HepG2 (cell line): ENCODE measurements at regions of chr1 and their contacts with region 1.

Region 1: GRCh38 chr1:161165742-161166668 is at the start of gene PPOX:
- DNase-seq: peak; percentile 97
- ATAC-seq: peak; percentile 96
- H3K4me3 ChIP-seq: peak within 1 kb of the TSS; percentile 71 to 88 (median 74)
- H3K27ac ChIP-seq: peak within 1 kb of the TSS; percentile 62
- H3K4me1 ChIP-seq: peaks cover 25% of the 10 kb centered on the region
- H3K27me3 ChIP-seq: no peaks in the 10 kb centered on the region
- CTCF ChIP-seq: peak; percentile 61
- EP300 ChIP-seq: 0 out of 4 replicates have a peak, but pooled peaks of 1 of the 2 experiments have one; percentile 10
- POLR2A ChIP-seq: peak; percentile 69 to 79
- RAD21 ChIP-seq: no peak
- total RNA-seq, gene PPOX: 13.0 and 15.5 TPM in 2 replicates

Region 2: DNA sequence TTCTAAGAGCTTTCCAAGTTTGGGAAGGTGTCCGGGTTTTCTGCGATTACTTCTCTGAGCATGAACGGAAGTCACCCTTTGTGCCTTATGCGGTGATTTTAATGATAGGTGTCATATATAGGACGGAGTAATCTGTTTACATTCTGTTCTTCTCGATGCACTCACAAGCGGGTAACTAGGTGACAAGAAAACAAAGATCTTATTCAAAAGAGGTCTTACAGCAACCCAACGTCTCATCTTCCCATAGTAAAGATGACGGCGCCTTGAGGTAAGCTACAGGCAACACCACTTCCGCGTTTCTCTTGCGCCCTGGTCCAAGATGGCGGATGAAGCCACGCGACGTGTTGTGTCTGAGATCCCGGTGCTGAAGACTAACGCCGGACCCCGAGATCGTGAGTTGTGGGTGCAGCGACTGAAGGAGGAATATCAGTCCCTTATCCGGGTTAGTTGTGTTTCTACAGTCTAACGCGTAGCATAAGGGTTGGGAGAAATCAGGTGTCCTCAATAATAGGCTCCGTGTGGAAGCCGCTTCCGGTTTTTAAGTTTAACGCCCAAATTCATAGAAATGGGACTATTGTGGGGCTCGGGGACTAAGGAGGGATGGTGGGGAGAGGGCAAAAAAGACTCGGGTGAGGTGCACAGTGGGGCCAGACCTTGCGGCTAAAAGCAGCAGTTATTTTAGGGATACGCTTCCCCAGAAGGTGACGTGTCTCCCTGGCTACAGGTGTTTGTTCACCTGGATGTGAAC is 12.2 kb before region 1 on chr1 and contains the start of gene UFC1:
- CTCF ChIA-PET with region 1: no interaction called
- POLR2A ChIA-PET with region 1: interaction called, 30 read pairs
- in situ Hi-C with region 1: no loop called
- intact Hi-C with region 1: no loop called
- DNase-seq: peak; percentile 86
- ATAC-seq: peak; percentile 95
- H3K4me3 ChIP-seq: peak within 1 kb of the TSS; percentile 78 to 85 (median 78)
- H3K27ac ChIP-seq: peak within 1 kb of the TSS; percentile 99
- H3K4me1 ChIP-seq: peaks cover 24% of the 10 kb centered on the region
- H3K27me3 ChIP-seq: no peaks in the 10 kb centered on the region; a peak in 1 of 5 replicates
- CTCF ChIP-seq: no peak
- EP300 ChIP-seq: no peak
- POLR2A ChIP-seq: peak; percentile 77 to 93
- RAD21 ChIP-seq: no peak
- total RNA-seq, gene UFC1: 72.8 and 96.5 TPM in 2 replicates

Region 3: GRCh38 chr1:161177112-161177935 is 11.3 kb after region 1 on chr1 and contains the start of gene B4GALT3:
- CTCF ChIA-PET with region 1: interaction called, 4 read pairs
- POLR2A ChIA-PET with region 1: interaction called, 27 read pairs
- in situ Hi-C with region 1: no loop called
- intact Hi-C with region 1: no loop called
- DNase-seq: peak; percentile 87
- ATAC-seq: peak; percentile 96
- H3K4me3 ChIP-seq: peak within 1 kb of the TSS; percentile 83 to 92 (median 83)
- H3K27ac ChIP-seq: peak within 1 kb of the TSS; percentile 79
- H3K4me1 ChIP-seq: peaks cover 19% of the 10 kb centered on the region
- H3K27me3 ChIP-seq: no peaks in the 10 kb centered on the region; a peak in 1 of 5 replicates
- CTCF ChIP-seq: peak; percentile 78
- EP300 ChIP-seq: 0 out of 4 replicates have a peak, but pooled peaks of 1 of the 2 experiments have one; percentile 3
- POLR2A ChIP-seq: peak; percentile 96 to 99
- RAD21 ChIP-seq: peak; percentile 55
- total RNA-seq, gene B4GALT3: 26.7 and 35.6 TPM in 2 replicates

Region 4: GRCh38 chr1:161267321-161267720 is 101.3 kb after region 1 on chr1:
- CTCF ChIA-PET with region 1: no interaction called
- POLR2A ChIA-PET with region 1: no interaction called
- in situ Hi-C with region 1: no loop called
- intact Hi-C with region 1: no loop called
- DNase-seq: no peak
- ATAC-seq: no peak
- H3K4me3 ChIP-seq: no peak overlapping the region
- H3K27ac ChIP-seq: no peak overlapping the region
- H3K4me1 ChIP-seq: no peaks in the 10 kb centered on the region
- H3K27me3 ChIP-seq: no peaks in the 10 kb centered on the region; a peak in 1 of 5 replicates
- CTCF ChIP-seq: no peak
- EP300 ChIP-seq: no peak
- POLR2A ChIP-seq: no peak
- RAD21 ChIP-seq: no peak

Region 5: DNA sequence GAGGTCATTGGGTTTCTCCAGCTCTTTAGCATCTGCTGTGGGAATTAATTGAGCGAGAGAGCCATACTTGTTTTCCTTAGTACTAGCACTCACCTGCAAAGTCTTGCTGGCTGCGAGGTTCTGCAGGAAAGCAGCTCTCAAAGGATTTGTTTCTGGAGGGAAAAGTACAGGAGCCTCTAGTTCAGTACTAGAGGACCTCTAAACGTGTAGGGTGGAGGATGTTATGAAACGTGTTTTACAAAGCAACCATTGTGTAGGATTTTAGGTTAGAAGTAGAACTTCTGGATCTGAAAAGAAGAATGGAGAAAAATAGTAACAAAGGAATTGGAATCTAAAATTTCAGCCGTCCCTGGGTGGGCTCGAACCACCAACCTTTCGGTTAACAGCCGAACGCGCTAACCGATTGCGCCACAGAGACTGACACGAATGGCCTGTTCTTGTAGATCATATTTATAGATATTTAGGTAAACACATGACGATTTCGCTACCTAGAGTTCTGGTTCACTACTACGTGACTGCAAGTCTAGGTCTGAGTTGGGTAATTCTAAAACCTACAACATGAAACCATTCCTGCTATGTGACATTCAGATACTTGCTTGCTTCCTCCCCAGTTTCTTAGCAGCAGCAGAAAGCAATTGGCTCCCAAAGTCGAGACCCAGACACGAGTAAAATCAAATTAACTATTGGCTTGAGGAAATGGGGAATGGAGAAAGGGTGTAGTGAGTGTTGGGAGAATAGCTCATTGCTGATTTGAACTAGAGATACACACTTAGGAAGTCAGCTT is 261.9 kb after region 1 on chr1:
- CTCF ChIA-PET with region 1: no interaction called
- POLR2A ChIA-PET with region 1: no interaction called
- in situ Hi-C with region 1: no loop called
- intact Hi-C with region 1: no loop called
- DNase-seq: peak; percentile 35
- ATAC-seq: peak; percentile 66
- H3K4me3 ChIP-seq: peak overlapping the region; percentile 33 to 60 (median 43)
- H3K27ac ChIP-seq: no peak overlapping the region
- H3K4me1 ChIP-seq: peaks cover 23% of the 10 kb centered on the region
- H3K27me3 ChIP-seq: no peaks in the 10 kb centered on the region; a peak in 1 of 5 replicates
- CTCF ChIP-seq: no peak
- EP300 ChIP-seq: peak in 1 of 2 experiments; percentile 27; a peak in 1 of 4 replicates
- POLR2A ChIP-seq: no peak
- RAD21 ChIP-seq: no peak